Activated T-helper 1 cell treated with anti-CD3 and anti-CD28 coated beads, Interleukin-12 subunit alpha, Interleukin-12 subunit beta, Interleukin-2, Interleukin-4 antibody, amounts not matched to agents 30 ng/mL and 10 ng/mL and 1 ng/mL, durations not matched to agents 14 hours and 24 hours and 36 hours (primary cell): ENCODE measurements at regions of chr15 and their contacts with region 1.

Region 1: GRCh38 chr15:72783563-72784237 is at the start of gene ADPGK:
- DNase-seq: peak; percentile 95
- H3K4me3 Mint-ChIP-seq: peak within 1 kb of the TSS; percentile 92
- H3K27ac Mint-ChIP-seq: peak within 1 kb of the TSS; percentile 99
- H3K4me1 Mint-ChIP-seq: peaks cover 68% of the 10 kb centered on the region
- H3K27me3 Mint-ChIP-seq: no peaks in the 10 kb centered on the region
- total RNA-seq, gene ADPGK: 94.0 and 101 TPM in 2 replicates

Region 2: DNA sequence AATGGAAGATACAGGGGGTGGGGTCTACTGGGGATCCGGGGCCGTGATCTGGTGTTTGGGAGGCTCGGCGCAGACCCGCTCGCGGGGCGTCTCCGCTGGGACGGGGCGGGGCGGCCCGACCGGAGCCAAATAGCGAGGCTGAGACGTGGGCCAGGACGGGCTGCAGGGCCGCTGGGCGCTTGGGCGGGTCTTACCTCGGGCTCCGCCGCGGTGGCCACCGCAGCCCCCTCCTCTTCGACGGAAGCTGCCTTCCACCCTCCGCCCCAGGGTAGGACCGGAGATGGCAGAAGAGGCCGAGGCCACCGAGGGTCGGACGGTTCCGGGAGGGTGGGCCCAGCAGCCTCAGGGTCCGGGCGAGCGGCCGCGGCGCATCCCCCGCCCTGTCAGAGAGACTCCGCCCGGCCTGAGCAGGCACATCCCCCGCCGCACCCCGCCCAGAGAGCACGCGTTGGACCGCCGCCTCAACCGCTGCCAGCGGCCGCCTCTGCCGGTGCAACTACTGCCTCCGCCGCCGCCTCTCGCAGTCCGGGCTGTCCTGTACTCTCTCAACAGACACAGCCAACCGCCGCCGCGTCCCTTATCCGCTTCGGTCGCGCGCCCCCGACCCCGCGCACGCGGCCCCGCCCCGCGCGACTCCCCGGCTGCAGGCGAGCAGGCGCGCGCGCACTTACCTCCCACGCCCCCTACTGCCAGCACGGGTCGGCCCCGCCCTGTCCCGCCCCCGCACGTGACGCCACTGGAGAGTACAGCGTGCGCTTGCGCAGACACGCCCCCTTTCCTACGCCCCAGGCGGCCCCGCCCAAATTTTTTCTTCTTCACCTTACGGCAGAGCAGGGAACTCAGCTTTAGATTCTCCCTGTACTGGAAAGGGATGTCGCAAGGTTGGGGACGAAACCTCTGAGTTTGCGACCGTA is 666.0 kb before region 1 on chr15 and contains the start of gene MYO9A:
- intact Hi-C with region 1: loop called (anchors 2 kb)
- DNase-seq: peak; percentile 95
- H3K4me3 Mint-ChIP-seq: peak within 1 kb of the TSS; percentile 93
- H3K27ac Mint-ChIP-seq: peak within 1 kb of the TSS; percentile 95
- H3K4me1 Mint-ChIP-seq: peaks cover 23% of the 10 kb centered on the region
- H3K27me3 Mint-ChIP-seq: peaks cover 16% of the 10 kb centered on the region
- total RNA-seq, gene MYO9A: 15.2 and 16.4 TPM in 2 replicates

Region 3: GRCh38 chr15:72375847-72376581 is 407.7 kb before region 1 on chr15 and contains the start of gene HEXA:
- intact Hi-C with region 1: loop called (anchors 5 kb)
- DNase-seq: peak; percentile 94
- H3K4me3 Mint-ChIP-seq: peak within 1 kb of the TSS; percentile 89
- H3K27ac Mint-ChIP-seq: peak within 1 kb of the TSS; percentile 93
- H3K4me1 Mint-ChIP-seq: peaks cover 31% of the 10 kb centered on the region
- H3K27me3 Mint-ChIP-seq: peaks cover 4% of the 10 kb centered on the region
- total RNA-seq, gene HEXA: 55.7 and 61.0 TPM in 2 replicates

Region 4: DNA sequence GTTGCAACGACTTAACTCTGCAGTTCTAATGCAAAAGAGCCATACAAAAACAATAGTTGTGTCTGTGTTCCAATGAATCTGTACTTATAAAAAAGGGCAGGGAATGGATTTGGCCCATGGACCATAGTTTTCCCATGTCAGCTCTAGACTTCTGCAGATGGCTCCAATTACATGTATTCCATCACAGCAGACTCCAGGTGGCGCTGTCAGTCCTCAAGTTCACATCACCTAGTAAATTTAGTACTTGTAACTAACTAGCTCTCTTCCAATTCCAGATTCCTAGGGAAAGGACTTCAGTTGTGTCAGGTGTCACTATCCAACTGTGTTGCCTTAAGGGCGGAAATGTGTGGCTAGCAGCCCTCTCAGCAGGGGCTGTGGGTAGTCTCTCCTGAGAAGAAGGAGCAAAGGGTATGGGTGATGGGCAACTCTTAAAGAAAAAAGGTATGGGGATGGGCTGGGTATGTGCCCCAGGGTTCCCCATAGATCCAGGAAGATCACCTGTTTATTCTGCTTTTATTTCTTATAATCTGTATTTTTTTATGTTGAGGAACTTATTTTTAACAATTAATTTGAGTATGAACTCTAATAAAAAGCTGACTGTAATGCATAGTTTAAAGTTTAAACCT is 61.5 kb before region 1 on chr15:
- intact Hi-C with region 1: loop called (anchors 1 kb)
- DNase-seq: peak; percentile 44
- H3K4me3 Mint-ChIP-seq: no peak overlapping the region
- H3K27ac Mint-ChIP-seq: no peak overlapping the region
- H3K4me1 Mint-ChIP-seq: no peaks in the 10 kb centered on the region
- H3K27me3 Mint-ChIP-seq: no peaks in the 10 kb centered on the region

Region 5: DNA sequence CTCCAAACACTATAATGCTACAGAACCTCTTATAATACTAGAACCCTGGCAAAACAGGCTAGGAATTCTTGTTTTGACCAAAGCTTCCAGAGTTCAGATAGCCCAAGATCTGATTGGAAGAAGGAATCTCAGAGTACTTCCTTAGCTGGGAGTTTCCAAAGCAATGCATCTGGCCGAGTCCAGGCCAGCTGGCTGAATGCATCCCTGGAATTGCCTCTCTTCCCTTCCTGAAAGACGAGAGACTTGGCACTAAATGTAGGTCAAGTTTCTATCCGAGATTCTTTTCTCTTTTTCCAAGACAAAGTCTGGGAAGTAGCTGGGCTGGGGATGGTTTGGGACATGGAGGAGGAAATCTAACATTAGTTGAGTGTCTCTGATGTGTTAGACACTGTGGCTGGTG is 68.6 kb after region 1 on chr15:
- intact Hi-C with region 1: no loop called
- DNase-seq: no peak
- H3K4me3 Mint-ChIP-seq: no peak overlapping the region
- H3K27ac Mint-ChIP-seq: no peak overlapping the region
- H3K4me1 Mint-ChIP-seq: no peaks in the 10 kb centered on the region
- H3K27me3 Mint-ChIP-seq: peaks cover 22% of the 10 kb centered on the region

Region 6: GRCh38 chr15:73051811-73052678 is 268.3 kb after region 1 on chr15 and contains the start of gene NEO1:
- intact Hi-C with region 1: loop called (anchors 1 kb)
- DNase-seq: peak; percentile 74
- H3K4me3 Mint-ChIP-seq: peak within 1 kb of the TSS; percentile 82
- H3K27ac Mint-ChIP-seq: peak within 1 kb of the TSS; percentile 64
- H3K4me1 Mint-ChIP-seq: peaks cover 8% of the 10 kb centered on the region
- H3K27me3 Mint-ChIP-seq: peaks cover 27% of the 10 kb centered on the region
- total RNA-seq, gene NEO1: 5.6 and 9.1 TPM in 2 replicates

Region 7: GRCh38 chr15:73273181-73274002 is 489.7 kb after region 1 on chr15:
- intact Hi-C with region 1: loop called (anchors 5 kb)
- DNase-seq: peak; percentile 19
- H3K4me3 Mint-ChIP-seq: no peak overlapping the region
- H3K27ac Mint-ChIP-seq: no peak overlapping the region
- H3K4me1 Mint-ChIP-seq: peaks cover 6% of the 10 kb centered on the region
- H3K27me3 Mint-ChIP-seq: no peaks in the 10 kb centered on the region